ENCODE measurements at regions of chr20 and their contacts with region 1.

Region 1: GRCh38 chr20:33127422-33128097 is 40.4 kb upstream of the BPIFA2 start:
- DNase-seq: peak in 1 of 2 experiments; percentile 30
- H3K4me3 ChIP-seq: no peak overlapping the region
- H3K4me3 Mint-ChIP-seq: no peak overlapping the region
- H3K27ac Mint-ChIP-seq: no peak overlapping the region
- H3K4me1 ChIP-seq: 0 out of 2 replicates have a peak, but pooled peaks cover 5% of the 10 kb centered on the region
- H3K4me1 Mint-ChIP-seq: no peaks in the 10 kb centered on the region
- H3K27me3 ChIP-seq: no peaks in the 10 kb centered on the region; the same call in 1 of the 2 replicates
- H3K27me3 Mint-ChIP-seq: peaks cover 5% of the 10 kb centered on the region
- CTCF ChIP-seq: no peak

Region 2: DNA sequence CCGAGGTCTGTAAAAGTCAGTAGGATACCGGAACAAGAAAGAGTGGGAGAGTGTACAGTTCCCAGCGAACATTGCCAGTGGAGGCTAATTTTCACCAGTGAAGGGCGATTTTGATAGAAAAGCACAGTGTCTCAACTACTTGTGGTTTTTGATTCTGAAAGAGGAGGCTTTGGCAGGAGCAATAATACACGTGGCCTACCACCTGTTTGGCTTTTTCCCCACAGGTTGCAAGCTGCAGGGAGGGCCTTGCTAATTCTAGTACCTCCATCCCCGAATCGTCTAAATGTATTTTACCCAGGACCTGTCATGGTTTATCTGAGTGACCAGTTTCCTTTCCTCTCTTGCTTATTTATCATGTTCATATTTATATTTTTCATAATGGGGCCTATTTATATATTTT is 272.2 kb before region 1 on chr20:
- CTCF ChIA-PET with region 1: no interaction called
- POLR2A ChIA-PET with region 1: interaction called, 12 read pairs
- intact Hi-C with region 1: no loop called
- DNase-seq: no peak
- H3K4me3 ChIP-seq: no peak overlapping the region
- H3K4me3 Mint-ChIP-seq: no peak overlapping the region
- H3K27ac Mint-ChIP-seq: no peak overlapping the region
- H3K4me1 ChIP-seq: no peaks in the 10 kb centered on the region
- H3K4me1 Mint-ChIP-seq: no peaks in the 10 kb centered on the region
- H3K27me3 ChIP-seq: no peaks in the 10 kb centered on the region
- H3K27me3 Mint-ChIP-seq: no peaks in the 10 kb centered on the region
- CTCF ChIP-seq: no peak

Region 3: DNA sequence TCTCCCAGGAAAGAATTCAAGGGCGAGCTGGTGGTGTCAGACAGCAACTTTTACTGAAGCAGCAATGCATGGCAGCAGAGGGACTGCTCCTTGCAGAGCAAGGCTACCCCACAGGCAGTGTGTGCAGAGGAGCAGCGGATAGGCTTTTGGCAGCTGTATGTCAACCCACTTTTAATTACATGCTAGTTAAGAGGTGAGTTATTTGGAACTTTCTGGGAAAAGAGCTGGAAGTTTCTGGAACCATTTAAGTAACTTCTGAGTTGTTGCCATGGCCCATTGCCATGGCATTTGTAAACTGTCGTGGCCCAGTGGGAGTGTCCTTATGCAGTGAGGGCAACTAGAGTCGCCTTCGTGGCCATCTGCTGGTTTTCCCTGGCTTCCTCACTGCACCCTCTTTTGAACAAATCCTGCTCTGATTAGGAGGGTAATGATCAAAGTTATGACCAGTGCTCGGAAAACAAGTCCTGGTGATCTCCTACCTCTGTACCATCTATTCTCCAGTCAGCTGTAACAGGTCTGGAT is 14.1 kb before region 1 on chr20:
- CTCF ChIA-PET with region 1: no interaction called
- POLR2A ChIA-PET with region 1: no interaction called
- intact Hi-C with region 1: loop called (anchors 2 kb)
- DNase-seq: no peak
- H3K4me3 ChIP-seq: no peak overlapping the region
- H3K4me3 Mint-ChIP-seq: no peak overlapping the region
- H3K27ac Mint-ChIP-seq: no peak overlapping the region
- H3K4me1 ChIP-seq: no peaks in the 10 kb centered on the region
- H3K4me1 Mint-ChIP-seq: no peaks in the 10 kb centered on the region
- H3K27me3 ChIP-seq: no peaks in the 10 kb centered on the region
- H3K27me3 Mint-ChIP-seq: no peaks in the 10 kb centered on the region
- CTCF ChIP-seq: no peak